Activated naive CD4-positive, alpha-beta T cell treated with anti-CD3 and anti-CD28 coated beads for 36 hours (primary cell): ENCODE measurements at regions of chr6 and their contacts with region 1.

Region 1: GRCh38 chr6:161370880-161371279 is 97.0 kb upstream of the AGPAT4 start:
- DNase-seq: peak; percentile 75
- H3K4me3 Mint-ChIP-seq: no peak overlapping the region
- H3K27ac Mint-ChIP-seq: no peak overlapping the region
- H3K4me1 Mint-ChIP-seq: no peaks in the 10 kb centered on the region
- H3K27me3 Mint-ChIP-seq: no peaks in the 10 kb centered on the region

Region 2: GRCh38 chr6:160733050-160733646 is 637.7 kb before region 1 on chr6:
- CTCF ChIA-PET with region 1: interaction called, 11 read pairs
- intact Hi-C with region 1: loop called (anchors 1 kb)
- DNase-seq: peak; percentile 56
- H3K4me3 Mint-ChIP-seq: no peak overlapping the region
- H3K27ac Mint-ChIP-seq: no peak overlapping the region
- H3K4me1 Mint-ChIP-seq: no peaks in the 10 kb centered on the region
- H3K27me3 Mint-ChIP-seq: peaks cover 15% of the 10 kb centered on the region

Region 3: DNA sequence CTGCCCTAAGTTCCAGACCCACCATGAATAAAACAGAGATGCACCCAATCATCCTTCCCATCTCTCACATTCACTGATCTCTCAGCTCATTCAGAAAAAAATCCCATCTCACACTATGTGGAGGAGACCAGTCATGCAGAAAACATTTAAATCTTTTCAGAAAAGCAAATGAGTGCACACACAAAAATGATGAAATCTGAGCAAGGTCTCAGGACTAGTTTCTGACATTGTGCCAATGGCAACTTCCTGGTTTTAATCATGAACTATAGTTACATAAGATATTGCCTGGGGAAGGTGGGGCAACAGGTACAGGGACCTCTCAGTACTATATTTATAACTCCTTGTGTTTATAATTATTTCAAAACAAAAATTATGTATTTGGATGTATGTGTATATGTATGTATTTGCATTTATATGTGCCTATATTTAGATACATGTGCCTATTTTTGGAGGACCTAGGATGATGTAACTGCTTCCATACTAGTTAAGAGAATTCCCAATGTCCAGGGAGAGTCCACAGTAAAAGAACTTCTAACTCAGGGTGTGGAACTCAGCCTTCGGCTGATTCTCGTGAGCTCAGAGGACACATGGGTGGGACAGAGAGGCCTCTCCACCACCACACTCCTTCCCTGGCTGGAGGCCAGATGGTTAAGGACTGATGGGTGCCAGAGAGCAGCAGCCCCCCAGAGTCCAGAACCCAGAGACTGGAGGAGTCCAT is 451.0 kb before region 1 on chr6:
- CTCF ChIA-PET with region 1: interaction called, 14 read pairs
- intact Hi-C with region 1: no loop called
- DNase-seq: no peak
- H3K4me3 Mint-ChIP-seq: no peak overlapping the region
- H3K27ac Mint-ChIP-seq: no peak overlapping the region
- H3K4me1 Mint-ChIP-seq: no peaks in the 10 kb centered on the region
- H3K27me3 Mint-ChIP-seq: peaks cover 10% of the 10 kb centered on the region

Region 4: DNA sequence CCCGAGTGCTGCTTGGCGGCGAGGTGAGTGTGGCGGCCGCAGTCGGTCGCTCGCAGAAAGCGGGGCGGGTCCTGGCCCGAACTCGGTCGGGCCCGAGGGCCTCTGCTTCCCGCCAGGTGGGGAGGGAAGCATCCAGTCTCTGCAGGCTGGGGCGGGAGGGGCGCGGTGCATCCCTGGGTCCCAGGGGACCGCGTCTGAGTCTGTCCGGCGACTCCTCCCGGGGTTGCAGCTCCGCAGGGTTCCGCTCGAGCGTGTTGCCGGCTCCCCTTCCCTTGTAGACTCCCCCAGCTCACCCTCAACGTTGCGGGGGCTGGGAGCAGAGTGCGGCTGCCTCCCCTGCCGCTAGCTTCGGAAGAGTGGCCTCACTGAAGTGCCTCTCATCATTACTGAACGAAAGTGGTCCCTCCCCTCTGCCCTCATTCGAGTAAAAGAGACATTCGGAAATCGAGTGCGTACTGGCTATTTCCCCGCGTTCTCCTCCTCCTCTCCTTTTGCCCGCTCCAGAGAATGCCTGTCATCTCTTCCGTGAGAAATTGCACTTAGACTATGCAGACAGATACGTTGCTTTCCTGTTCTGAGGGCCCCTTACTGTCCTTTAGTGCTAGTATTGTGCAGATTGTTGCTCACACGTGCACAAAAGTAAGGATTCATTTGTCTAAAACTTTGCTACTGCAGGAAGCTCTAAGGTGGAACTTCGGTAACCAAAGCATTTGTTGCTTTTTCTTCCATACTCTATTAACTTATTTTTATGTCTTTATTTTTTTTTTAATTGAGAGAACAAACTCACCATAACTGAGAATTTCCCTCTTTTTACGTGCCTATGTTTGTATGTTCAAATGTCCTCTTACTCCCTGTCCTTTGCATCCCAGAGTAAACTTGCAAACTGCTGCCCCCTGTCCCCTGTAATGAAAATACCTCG is 378.6 kb before region 1 on chr6:
- CTCF ChIA-PET with region 1: interaction called, 4 read pairs
- intact Hi-C with region 1: loop called (anchors 2 kb)
- DNase-seq: peak; percentile 51
- H3K4me3 Mint-ChIP-seq: peak overlapping the region; percentile 87
- H3K27ac Mint-ChIP-seq: peak overlapping the region; percentile 77
- H3K4me1 Mint-ChIP-seq: peaks cover 31% of the 10 kb centered on the region
- H3K27me3 Mint-ChIP-seq: peaks cover 2% of the 10 kb centered on the region

Region 5: DNA sequence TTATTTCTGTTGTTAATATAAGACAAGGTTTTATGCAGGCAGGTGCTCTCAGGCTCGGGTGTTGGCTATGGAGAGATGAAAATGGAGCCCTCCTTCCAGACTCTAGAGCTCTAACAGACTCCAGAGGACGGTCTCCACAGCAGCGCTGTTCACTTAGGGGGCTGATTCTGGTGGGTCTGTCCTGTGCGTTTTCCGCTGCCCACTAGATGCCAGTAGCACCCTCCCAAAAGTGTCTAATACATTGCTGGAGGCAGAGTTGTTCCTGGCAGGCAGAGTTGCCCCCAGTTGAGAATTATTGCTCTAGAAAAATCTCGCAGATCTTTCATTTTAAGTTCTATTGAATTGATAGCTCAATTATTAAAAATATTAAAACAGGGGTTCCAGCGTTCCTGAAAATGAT is 269.4 kb before region 1 on chr6:
- CTCF ChIA-PET with region 1: interaction called, 4 read pairs
- intact Hi-C with region 1: loop called (anchors 2 kb)
- DNase-seq: no peak
- H3K4me3 Mint-ChIP-seq: no peak overlapping the region
- H3K27ac Mint-ChIP-seq: no peak overlapping the region
- H3K4me1 Mint-ChIP-seq: peaks cover 6% of the 10 kb centered on the region
- H3K27me3 Mint-ChIP-seq: no peaks in the 10 kb centered on the region

Region 6: DNA sequence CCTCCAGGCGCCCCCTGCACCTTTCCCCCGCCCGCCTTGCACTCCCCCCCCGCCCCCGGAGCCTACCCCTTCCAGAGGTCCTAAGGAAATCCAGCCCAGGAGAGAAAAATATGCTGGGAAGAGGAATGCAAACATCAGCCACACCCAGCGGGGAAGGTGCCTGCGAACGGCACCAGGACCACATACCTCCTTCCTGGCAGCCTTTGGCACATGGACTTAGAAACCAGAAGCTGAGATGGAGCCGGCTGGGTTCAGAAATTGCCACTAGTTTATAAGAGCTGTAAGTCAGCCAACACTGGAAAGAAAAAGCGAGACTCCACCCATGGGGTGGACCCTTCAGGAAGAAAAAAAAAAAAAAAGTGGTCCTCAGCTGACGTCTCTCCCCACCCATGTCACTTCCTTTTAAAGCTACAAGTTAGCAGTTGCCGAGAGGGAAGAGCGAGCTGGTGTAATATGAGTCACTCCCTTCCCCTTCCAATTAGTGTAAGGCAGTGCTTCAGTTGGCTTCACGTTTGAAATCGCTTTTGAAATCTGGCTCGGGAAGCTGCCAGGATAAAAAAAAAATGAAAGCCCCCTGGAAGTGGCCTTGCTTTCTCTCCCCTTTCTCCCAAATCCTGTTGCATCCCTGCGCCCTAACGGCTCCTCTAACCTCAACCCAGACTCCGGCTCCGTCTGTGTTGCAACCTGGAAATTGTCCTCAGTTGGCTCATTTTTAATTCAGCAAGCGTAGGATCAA is 97.0 kb before region 1 on chr6 and contains the start of gene AGPAT4:
- CTCF ChIA-PET with region 1: no interaction called
- intact Hi-C with region 1: loop called (anchors 5 kb)
- DNase-seq: peak; percentile 71
- H3K4me3 Mint-ChIP-seq: peak within 1 kb of the TSS; percentile 73
- H3K27ac Mint-ChIP-seq: peak within 1 kb of the TSS; percentile 77
- H3K4me1 Mint-ChIP-seq: peaks cover 16% of the 10 kb centered on the region
- H3K27me3 Mint-ChIP-seq: peaks cover 3% of the 10 kb centered on the region
- total RNA-seq, gene AGPAT4: 3.7 to 4.2 TPM